ENCODE measurements at regions of chr16 and their contacts with region 1.

Region 1: GRCh38 chr16:86519649-86520316 is 9.5 kb downstream of the FOXF1 start:
- DNase-seq: peak; percentile 67 to 77
- H3K4me3 ChIP-seq: no peak overlapping the region
- H3K4me3 Mint-ChIP-seq: no peak overlapping the region
- H3K27ac Mint-ChIP-seq: no peak overlapping the region
- H3K4me1 ChIP-seq: no peaks in the 10 kb centered on the region
- H3K4me1 Mint-ChIP-seq: no peaks in the 10 kb centered on the region
- H3K27me3 ChIP-seq: peaks cover 1% of the 10 kb centered on the region; the same call in 1 of the 2 replicates
- H3K27me3 Mint-ChIP-seq: peaks cover 20% of the 10 kb centered on the region
- CTCF ChIP-seq: peak; percentile 94 to 96

Region 2: DNA sequence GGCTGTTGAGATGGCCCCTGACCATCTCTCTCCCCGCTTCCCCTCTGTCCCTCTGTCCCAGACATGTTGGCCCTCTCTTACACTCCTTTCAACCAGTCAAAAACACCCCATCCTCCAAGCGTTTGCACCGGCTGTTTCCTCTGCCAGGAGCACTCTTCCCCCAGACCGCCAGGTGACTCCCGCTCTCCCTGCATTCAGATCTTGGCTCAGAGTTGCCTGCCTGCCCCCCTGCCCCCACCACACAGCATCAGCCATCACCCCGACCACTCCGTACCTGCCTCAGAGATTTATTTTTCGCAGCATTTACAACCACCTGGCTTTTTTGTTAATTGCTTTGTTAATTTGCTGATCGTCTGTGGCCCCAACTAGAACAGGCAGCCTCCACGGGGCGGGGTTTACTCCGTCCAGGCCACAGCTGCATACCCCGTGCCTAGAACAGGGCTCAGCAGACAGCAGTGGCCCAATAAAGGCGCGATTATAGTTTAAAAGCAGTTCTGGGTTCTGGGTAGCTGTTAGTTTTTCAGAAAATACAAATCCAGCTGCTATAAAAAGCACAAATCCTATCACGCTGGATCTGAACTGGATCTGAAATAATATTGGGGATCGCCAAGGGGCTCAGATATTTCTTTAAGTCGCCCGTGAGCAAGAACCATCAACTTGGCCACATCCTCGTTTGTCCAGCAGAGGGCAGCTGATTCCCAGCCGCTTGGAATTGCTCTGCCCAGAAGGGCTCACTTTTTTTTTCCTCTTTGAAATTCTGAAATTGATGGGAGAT is 447.3 kb before region 1 on chr16:
- CTCF ChIA-PET with region 1: interaction called, 7 read pairs
- POLR2A ChIA-PET with region 1: interaction called, 10 read pairs
- intact Hi-C with region 1: loop called (anchors 1 kb)
- DNase-seq: peak; percentile 72 to 78
- H3K4me3 ChIP-seq: no peak overlapping the region
- H3K4me3 Mint-ChIP-seq: no peak overlapping the region
- H3K27ac Mint-ChIP-seq: no peak overlapping the region
- H3K4me1 ChIP-seq: no peaks in the 10 kb centered on the region
- H3K4me1 Mint-ChIP-seq: no peaks in the 10 kb centered on the region
- H3K27me3 ChIP-seq: no peaks in the 10 kb centered on the region
- H3K27me3 Mint-ChIP-seq: no peaks in the 10 kb centered on the region
- CTCF ChIP-seq: peak; percentile 91 to 96

Region 3: GRCh38 chr16:86343027-86343787 is 176.6 kb before region 1 on chr16:
- CTCF ChIA-PET with region 1: interaction called, 18 read pairs
- POLR2A ChIA-PET with region 1: no interaction called
- intact Hi-C with region 1: loop called (anchors 1 kb)
- DNase-seq: peak in 1 of 2 experiments; percentile 12
- H3K4me3 ChIP-seq: no peak overlapping the region
- H3K4me3 Mint-ChIP-seq: no peak overlapping the region
- H3K27ac Mint-ChIP-seq: no peak overlapping the region
- H3K4me1 ChIP-seq: no peaks in the 10 kb centered on the region
- H3K4me1 Mint-ChIP-seq: no peaks in the 10 kb centered on the region
- H3K27me3 ChIP-seq: 0 out of 2 replicates have a peak, but pooled peaks cover 1% of the 10 kb centered on the region
- H3K27me3 Mint-ChIP-seq: peaks cover 32% of the 10 kb centered on the region
- CTCF ChIP-seq: no peak